Endothelial cell of umbilical vein (primary cell): ENCODE measurements at regions of chr17 and their contacts with region 1.

Region 1: GRCh38 chr17:233473-233941 is 52.1 kb upstream of the DOC2B start:
- DNase-seq: no peak
- H3K4me3 ChIP-seq: peak overlapping the region in 1 of 3 experiments; percentile 12
- H3K27ac ChIP-seq: no peak overlapping the region
- H3K4me1 ChIP-seq: peaks cover 34% of the 10 kb centered on the region
- H3K27me3 ChIP-seq: no peaks in the 10 kb centered on the region
- CTCF ChIP-seq: no peak
- POLR2A ChIP-seq: no peak

Region 2: DNA sequence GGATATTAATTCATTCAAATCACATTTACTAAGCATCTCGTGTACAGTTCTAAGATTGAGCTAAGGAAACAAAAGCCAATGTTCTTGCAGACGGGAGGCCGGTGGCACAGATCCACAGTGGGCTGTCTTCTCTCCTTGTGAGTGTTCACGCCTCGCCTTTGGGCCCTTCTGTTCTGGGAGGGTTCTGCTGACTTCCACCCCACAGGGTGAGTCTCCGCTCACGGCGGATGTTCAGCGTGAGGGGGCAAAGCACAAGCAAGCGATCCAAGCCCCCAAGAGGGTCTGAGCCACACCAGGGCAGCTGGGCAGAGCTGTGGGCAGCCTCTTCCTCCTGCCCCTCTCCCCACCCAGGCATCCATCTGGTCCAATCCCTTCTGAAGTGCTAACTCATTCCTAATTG is 32.2 kb after region 1 on chr17:
- CTCF ChIA-PET with region 1: no interaction called
- POLR2A ChIA-PET with region 1: no interaction called
- dilution Hi-C with region 1: no loop called
- intact Hi-C with region 1: loop called (anchors 1 kb)
- DNase-seq: no peak
- H3K4me3 ChIP-seq: no peak overlapping the region
- H3K27ac ChIP-seq: no peak overlapping the region
- H3K4me1 ChIP-seq: peaks cover 9% of the 10 kb centered on the region
- H3K27me3 ChIP-seq: no peaks in the 10 kb centered on the region
- CTCF ChIP-seq: no peak
- POLR2A ChIP-seq: no peak